Activated naive CD4-positive, alpha-beta T cell treated with anti-CD3 and anti-CD28 coated beads for 36 hours (primary cell): ENCODE measurements at regions of chr1 and their contacts with region 1.

Region 1: GRCh38 chr1:203326830-203327683 is 21.7 kb downstream of the BTG2 start:
- DNase-seq: peak; percentile 96
- H3K4me3 Mint-ChIP-seq: peak overlapping the region; percentile 76
- H3K27ac Mint-ChIP-seq: peak overlapping the region; percentile 90
- H3K4me1 Mint-ChIP-seq: peaks cover 53% of the 10 kb centered on the region
- H3K27me3 Mint-ChIP-seq: no peaks in the 10 kb centered on the region

Region 2: DNA sequence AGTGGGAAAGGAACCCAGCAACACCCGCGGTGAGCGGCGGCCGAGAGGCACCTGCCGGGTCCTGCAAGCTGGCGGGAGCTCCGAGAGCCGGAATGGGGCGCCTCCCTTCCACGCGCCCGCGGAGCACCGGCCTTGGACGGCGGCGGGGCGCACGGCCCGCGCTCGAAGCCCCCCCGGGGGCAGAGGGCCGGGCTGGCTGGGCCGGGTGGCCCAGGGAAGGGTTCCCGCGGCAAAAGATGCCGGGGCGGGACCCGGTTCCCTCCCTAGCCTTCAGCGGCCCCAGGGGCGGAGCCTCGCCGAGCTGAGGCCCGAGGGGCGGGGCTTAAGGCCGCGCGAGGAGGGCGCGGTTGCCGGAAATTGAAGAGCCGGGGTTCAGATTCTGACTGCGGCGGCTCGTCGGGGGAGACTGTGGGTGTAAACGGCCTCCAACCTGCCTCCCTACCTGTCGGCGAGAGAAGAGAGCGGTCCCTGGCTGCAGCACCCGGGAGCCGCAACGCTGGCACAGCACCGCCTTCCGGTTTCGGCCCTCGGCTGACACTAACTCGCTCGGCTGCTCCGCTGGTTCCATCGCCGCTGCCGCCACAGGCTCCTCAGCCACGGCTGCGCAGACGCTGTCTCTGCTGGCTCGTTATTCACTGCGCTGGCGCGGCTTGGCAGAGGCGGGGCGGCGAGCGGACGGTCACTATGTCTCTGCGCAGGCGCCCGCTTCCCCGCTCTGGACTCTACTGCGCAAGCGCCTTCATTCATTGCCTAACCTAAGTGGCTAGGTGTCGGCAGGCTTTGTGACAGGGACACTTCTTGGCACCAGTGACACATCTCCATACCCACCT is 438.3 kb before region 1 on chr1 and contains the start of gene RABIF:
- CTCF ChIA-PET with region 1: no interaction called
- intact Hi-C with region 1: loop called (anchors 1 kb)
- DNase-seq: peak; percentile 97
- H3K4me3 Mint-ChIP-seq: peak within 1 kb of the TSS; percentile 94
- H3K27ac Mint-ChIP-seq: peak within 1 kb of the TSS; percentile 96
- H3K4me1 Mint-ChIP-seq: peaks cover 24% of the 10 kb centered on the region
- H3K27me3 Mint-ChIP-seq: no peaks in the 10 kb centered on the region
- total RNA-seq, gene RABIF: 5.9 to 6.2 TPM

Region 3: DNA sequence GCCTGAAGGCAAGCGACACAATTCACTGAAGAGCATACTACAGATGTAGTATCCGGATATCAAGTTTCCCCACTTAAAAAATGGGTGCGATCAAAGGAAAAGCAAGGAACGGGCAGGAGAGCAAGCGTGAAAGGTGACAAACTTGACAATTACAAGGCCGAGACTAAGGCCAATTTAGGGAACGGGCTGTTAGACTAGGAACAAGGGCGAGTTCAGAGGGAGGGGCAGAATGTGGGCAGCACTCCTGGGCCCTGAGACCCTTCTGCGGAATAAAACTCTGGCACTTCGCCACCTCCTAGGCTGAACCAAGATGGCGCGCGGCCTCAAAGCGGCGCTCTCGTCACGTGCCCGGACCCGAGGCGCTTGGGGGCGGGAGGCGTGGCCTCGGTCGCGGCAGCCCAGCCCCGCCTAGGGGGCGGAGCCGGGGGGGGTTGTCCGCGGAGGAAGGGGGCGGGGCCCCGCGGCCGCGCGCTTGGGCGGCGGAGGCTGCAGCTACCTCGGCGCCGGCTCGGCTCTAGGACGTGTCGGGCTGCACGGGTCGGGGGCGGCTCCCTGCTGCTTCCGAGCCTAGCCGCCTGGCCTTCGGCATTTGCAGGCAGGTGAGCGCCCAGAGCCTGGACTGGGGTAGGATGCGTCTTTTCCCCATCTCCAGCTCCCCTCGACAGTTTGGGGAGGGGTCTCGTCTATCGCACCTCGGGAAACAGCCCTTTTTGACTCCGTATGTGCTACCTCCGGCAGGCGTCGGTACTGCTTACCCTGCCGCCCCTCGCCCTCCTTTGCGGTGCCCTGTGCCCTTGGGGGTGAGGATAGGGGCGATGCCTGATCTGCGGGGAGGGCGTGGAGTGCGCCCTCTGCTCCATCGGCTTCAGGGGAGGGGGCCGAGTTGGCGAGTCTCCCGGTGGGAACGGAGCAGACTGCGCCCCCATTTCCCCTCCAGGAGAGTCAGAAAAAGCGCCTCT is 300.7 kb before region 1 on chr1 and contains the start of gene PPFIA4:
- CTCF ChIA-PET with region 1: no interaction called
- intact Hi-C with region 1: loop called (anchors 5 kb)
- DNase-seq: peak; percentile 88
- H3K4me3 Mint-ChIP-seq: peak within 1 kb of the TSS; percentile 70
- H3K27ac Mint-ChIP-seq: peak within 1 kb of the TSS; percentile 32
- H3K4me1 Mint-ChIP-seq: peaks cover 10% of the 10 kb centered on the region
- H3K27me3 Mint-ChIP-seq: peaks cover 2% of the 10 kb centered on the region
- total RNA-seq, gene PPFIA4: 4.5 to 6.5 TPM

Region 4: GRCh38 chr1:203290261-203291089 is 36.6 kb before region 1 on chr1:
- CTCF ChIA-PET with region 1: interaction called, 35 read pairs
- intact Hi-C with region 1: loop called (anchors 1 kb)
- DNase-seq: peak; percentile 99
- H3K4me3 Mint-ChIP-seq: peak overlapping the region; percentile 83
- H3K27ac Mint-ChIP-seq: peak overlapping the region; percentile 99
- H3K4me1 Mint-ChIP-seq: peaks cover 82% of the 10 kb centered on the region
- H3K27me3 Mint-ChIP-seq: no peaks in the 10 kb centered on the region

Region 5: GRCh38 chr1:203361945-203362719 is 35.1 kb after region 1 on chr1:
- CTCF ChIA-PET with region 1: no interaction called
- intact Hi-C with region 1: no loop called
- DNase-seq: no peak
- H3K4me3 Mint-ChIP-seq: no peak overlapping the region
- H3K27ac Mint-ChIP-seq: no peak overlapping the region
- H3K4me1 Mint-ChIP-seq: no peaks in the 10 kb centered on the region
- H3K27me3 Mint-ChIP-seq: peaks cover 16% of the 10 kb centered on the region

Region 6: GRCh38 chr1:203649999-203650855 is 323.2 kb after region 1 on chr1:
- CTCF ChIA-PET with region 1: no interaction called
- intact Hi-C with region 1: loop called (anchors 2 kb)
- DNase-seq: peak; percentile 76
- H3K4me3 Mint-ChIP-seq: peak overlapping the region; percentile 62
- H3K27ac Mint-ChIP-seq: peak overlapping the region; percentile 46
- H3K4me1 Mint-ChIP-seq: peaks cover 67% of the 10 kb centered on the region
- H3K27me3 Mint-ChIP-seq: no peaks in the 10 kb centered on the region